GM12878 (cell line): ENCODE measurements at regions of chr6 and their contacts with region 1.

Region 1: DNA sequence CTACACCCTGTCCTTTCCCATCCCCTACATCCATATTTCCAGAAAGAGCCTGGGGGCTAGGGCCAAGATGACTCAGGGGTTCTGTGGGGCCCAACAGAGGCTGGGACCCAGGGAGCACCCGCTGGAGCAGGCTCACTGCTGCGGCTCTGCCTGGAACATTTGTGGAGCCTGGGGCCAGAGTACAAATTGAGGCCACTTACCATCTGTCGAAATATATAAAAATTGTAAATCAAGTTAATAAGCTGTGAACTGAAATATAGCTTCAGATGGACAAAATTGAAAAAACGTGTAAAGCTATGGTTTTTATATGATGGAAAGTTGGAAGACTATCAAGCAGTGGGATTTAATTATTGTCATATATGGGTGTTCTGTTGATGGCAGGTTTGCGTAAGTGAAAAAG is 82.9 kb upstream of the ATXN1 start:
- DNase-seq: no peak
- ATAC-seq: no peak
- H3K4me3 ChIP-seq: no peak overlapping the region
- H3K27ac ChIP-seq: no peak overlapping the region
- H3K4me1 ChIP-seq: peaks cover 16% of the 10 kb centered on the region
- H3K27me3 ChIP-seq: no peaks in the 10 kb centered on the region
- CTCF ChIP-seq: no peak
- EP300 ChIP-seq: no peak
- POLR2A ChIP-seq: no peak
- RAD21 ChIP-seq: no peak

Region 2: DNA sequence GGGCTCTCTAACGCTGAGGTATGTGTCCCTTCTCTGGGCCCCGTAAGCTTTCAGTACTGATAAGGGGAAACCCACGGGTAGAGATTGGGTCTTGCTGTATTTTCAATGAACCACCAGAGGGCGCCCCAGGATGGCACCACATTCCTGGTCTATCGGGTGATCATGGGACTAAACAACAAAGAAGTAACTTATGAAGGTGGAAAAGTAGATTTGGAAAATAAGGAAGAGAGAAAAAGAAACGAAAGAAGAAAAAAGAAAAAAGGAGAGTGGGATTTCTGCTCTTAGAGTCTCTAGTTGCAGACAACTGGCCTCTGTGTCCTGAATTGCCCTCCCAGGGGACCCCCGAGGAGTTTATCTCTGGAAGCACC is 512.0 kb before region 1 on chr6:
- CTCF ChIA-PET with region 1: no interaction called
- POLR2A ChIA-PET with region 1: no interaction called
- RAD21 ChIA-PET with region 1: no interaction called
- SMC1A ChIA-PET with region 1: no interaction called
- in situ Hi-C with region 1: no loop called
- intact Hi-C with region 1: no loop called
- DNase-seq: peak; percentile 78
- ATAC-seq: peak; percentile 99
- H3K4me3 ChIP-seq: no peak overlapping the region
- H3K27ac ChIP-seq: peak overlapping the region; percentile 13; the same call in 1 of the 2 replicates
- H3K4me1 ChIP-seq: peaks cover 19% of the 10 kb centered on the region
- H3K27me3 ChIP-seq: no peaks in the 10 kb centered on the region
- CTCF ChIP-seq: peak; percentile 77 to 95 (median 94); a peak in 5 of 6 replicates
- EP300 ChIP-seq: no peak
- POLR2A ChIP-seq: no peak
- RAD21 ChIP-seq: peak; percentile 99

Region 3: DNA sequence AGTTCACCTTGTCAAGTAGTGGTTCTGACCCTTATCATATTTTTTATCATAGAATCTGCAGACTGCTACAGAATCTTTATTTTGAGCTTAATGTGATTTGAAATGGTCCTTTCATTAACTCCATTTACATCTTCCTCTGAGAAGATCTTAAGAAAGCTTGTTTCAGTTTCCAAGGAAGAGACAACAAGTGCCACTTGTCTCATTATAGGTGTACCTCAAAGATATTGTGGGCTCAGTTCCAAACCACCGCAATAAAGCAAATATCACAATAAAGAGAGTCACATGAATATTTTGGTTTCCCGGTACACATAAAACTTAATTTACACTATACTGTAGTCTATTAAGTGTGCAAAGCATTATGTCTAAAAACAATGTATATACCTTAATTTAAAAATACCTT is 16.6 kb before region 1 on chr6:
- CTCF ChIA-PET with region 1: no interaction called
- POLR2A ChIA-PET with region 1: no interaction called
- RAD21 ChIA-PET with region 1: interaction called, 4 read pairs
- SMC1A ChIA-PET with region 1: interaction called, 6 read pairs
- in situ Hi-C with region 1: no loop called
- intact Hi-C with region 1: loop called (anchors 1 kb)
- DNase-seq: no peak
- ATAC-seq: no peak
- H3K4me3 ChIP-seq: no peak overlapping the region
- H3K27ac ChIP-seq: no peak overlapping the region
- H3K4me1 ChIP-seq: 0 out of 2 replicates have a peak, but pooled peaks cover 3% of the 10 kb centered on the region
- H3K27me3 ChIP-seq: no peaks in the 10 kb centered on the region
- CTCF ChIP-seq: no peak
- EP300 ChIP-seq: no peak
- POLR2A ChIP-seq: no peak
- RAD21 ChIP-seq: no peak